Activated CD4-positive, alpha-beta T cell treated with anti-CD3 and anti-CD28 coated beads for 36 hours (primary cell): ENCODE measurements at regions of chr3 and their contacts with region 1.

Region 1: DNA sequence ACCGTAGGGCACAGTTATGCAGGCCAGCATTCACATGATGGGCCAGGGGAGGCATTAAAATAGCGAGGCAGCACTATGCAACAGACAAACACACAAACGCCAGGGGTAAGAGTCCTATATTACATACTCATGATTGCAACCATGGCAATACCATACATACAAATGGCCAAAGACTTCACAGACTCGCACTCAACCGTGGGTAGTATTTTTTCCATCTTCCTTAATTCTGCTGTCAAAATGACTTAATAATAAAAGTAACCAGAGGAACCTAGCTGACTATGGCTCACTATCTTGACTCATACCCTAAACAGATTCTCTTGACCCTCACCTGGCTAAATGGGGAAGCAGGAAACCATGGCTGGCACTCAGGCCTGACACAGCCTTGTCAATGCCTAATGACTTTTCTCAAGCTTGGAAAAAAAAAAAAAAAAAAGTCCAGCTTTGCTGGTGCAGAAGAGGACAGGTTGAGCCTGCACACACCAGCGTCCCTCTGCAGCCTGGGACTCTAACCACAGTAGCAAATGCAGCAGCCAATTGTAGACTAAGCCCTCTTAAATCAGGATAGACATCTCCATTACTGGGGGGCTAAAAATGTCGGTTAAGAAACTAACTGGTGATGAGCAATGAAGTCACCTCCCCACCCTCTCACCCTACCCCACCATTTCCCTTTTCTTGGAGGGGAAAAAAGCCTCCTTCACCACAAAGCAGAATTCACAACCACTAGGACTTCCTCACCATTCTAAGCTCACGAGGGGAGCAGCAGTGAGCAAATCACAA is 23.1 kb downstream of the CCDC12 start:
- DNase-seq: no peak
- ATAC-seq: peak; percentile 21
- H3K4me3 Mint-ChIP-seq: peak overlapping the region; percentile 1
- H3K27ac Mint-ChIP-seq: peak overlapping the region; percentile 87
- H3K4me1 Mint-ChIP-seq: peaks cover 84% of the 10 kb centered on the region
- H3K27me3 Mint-ChIP-seq: no peaks in the 10 kb centered on the region

Region 2: GRCh38 chr3:46705022-46705530 is 248.3 kb before region 1 on chr3:
- CTCF ChIA-PET with region 1: no interaction called
- POLR2A ChIA-PET with region 1: no interaction called
- intact Hi-C with region 1: no loop called
- DNase-seq: peak; percentile 80
- ATAC-seq: peak; percentile 81
- H3K4me3 Mint-ChIP-seq: no peak overlapping the region
- H3K27ac Mint-ChIP-seq: no peak overlapping the region
- H3K4me1 Mint-ChIP-seq: peaks cover 8% of the 10 kb centered on the region
- H3K27me3 Mint-ChIP-seq: peaks cover 1% of the 10 kb centered on the region

Region 3: DNA sequence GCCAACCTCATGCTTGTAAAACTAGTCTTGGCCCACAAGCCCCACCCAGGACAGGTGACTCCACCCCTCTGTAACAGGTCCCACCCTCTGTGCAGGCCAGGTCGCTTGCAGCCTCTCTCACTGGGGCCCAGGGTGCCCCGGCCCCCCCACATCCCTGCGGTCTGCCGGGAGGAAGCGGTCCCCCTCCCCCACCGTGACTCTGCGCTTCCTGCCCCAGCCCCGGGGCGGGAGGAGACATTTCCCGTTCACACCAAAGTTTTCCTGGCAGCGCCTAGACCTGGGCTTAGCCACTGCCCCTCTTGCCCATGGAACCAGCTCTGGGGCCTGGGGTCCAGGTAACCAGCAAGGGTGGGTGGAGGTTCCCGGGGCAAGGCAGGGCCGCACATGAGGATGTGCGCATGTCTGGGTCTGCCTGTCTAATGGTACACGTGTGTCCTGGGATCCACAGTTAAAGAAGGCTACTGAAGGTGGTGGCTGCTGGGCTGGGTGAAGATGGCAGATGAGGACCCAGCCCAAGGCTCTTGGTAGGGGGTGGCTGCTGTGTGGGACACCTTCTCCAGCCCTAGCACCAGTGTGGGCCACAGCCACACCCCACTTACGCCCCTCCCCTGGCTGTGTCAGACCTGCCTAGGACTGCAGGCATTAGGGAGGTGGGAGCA is 34.5 kb after region 1 on chr3:
- CTCF ChIA-PET with region 1: interaction called, 5 read pairs
- POLR2A ChIA-PET with region 1: no interaction called
- intact Hi-C with region 1: loop called in 1 of 2 experiments (anchors 5 kb)
- DNase-seq: peak; percentile 92
- ATAC-seq: peak; percentile 98
- H3K4me3 Mint-ChIP-seq: peak overlapping the region; percentile 77
- H3K27ac Mint-ChIP-seq: peak overlapping the region; percentile 95
- H3K4me1 Mint-ChIP-seq: peaks cover 57% of the 10 kb centered on the region
- H3K27me3 Mint-ChIP-seq: no peaks in the 10 kb centered on the region